HepG2 (cell line): ENCODE measurements at regions of chr3 and their contacts with region 1.

Region 1: DNA sequence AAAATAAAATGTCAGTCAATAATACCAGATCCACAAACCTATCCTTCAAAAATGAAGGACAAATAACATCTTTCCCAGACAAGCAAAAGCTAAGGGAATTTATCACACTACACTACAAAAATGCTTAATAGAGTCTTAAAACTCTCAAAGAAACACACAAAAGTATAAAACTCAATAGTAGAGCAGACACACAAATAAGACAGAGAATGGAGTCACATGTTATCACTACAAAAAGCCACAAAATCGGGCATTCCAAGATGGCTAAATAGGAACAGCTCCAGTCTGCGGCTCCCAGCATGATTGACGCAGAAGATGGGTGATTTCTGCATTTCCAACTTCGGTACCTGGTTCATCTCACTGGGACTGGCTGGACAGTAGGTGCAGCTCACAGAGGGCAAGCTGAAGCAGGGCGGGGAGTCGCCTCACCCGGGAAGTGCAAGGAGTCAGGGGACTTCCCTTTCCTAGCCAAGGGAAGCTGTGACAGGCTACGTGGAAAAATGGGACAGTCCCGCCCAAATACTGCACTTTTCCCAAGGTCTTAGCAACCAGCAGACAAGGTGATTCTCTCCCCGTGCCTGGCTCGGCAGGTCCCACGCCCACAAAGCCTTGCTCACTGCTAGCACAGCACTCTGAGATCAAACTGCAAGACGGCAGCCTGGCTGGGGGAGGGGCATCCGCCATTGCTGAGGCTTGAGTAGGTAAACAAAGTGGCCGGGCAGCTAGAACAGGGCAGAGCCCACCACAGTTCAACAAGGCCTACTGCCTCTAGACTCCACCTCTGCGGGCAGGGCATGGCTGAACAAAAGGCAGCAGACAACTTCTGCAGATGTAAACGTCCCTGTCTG is 46.3 kb downstream of the SENP7 start:
- DNase-seq: peak; percentile 53
- ATAC-seq: peak; percentile 97
- H3K4me3 ChIP-seq: peak overlapping the region; percentile 54 to 71 (median 70)
- H3K27ac ChIP-seq: peak overlapping the region; percentile 69
- H3K4me1 ChIP-seq: peaks cover 26% of the 10 kb centered on the region
- H3K27me3 ChIP-seq: no peaks in the 10 kb centered on the region
- CTCF ChIP-seq: no peak
- EP300 ChIP-seq: no peak
- POLR2A ChIP-seq: peak; percentile 25 to 44; a peak in 2 of 4 replicates
- RAD21 ChIP-seq: no peak

Region 2: DNA sequence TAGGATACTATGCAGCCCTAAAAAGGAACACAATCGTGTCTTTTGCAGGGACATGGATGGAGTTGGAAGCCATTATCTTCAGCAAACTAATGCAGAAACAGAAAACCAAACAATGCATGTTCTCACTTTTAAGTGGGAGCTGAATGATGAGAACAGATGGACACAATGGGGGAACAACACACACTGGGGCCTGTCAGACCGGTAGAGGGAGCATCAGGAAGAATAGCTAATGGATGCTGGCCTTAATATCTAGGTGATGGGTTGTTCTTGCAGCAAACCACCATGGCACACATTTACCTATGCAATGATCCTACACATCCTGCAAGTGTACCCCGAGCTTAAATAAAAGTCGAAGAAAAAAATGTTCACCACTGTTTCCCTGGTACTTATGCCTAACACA is 28.9 kb after region 1 on chr3:
- CTCF ChIA-PET with region 1: no interaction called
- POLR2A ChIA-PET with region 1: no interaction called
- in situ Hi-C with region 1: no loop called
- intact Hi-C with region 1: no loop called
- DNase-seq: no peak
- ATAC-seq: peak; percentile 80
- H3K4me3 ChIP-seq: no peak overlapping the region
- H3K27ac ChIP-seq: no peak overlapping the region
- H3K4me1 ChIP-seq: peaks cover 7% of the 10 kb centered on the region
- H3K27me3 ChIP-seq: no peaks in the 10 kb centered on the region
- CTCF ChIP-seq: peak; percentile 46
- EP300 ChIP-seq: no peak
- POLR2A ChIP-seq: no peak
- RAD21 ChIP-seq: no peak

Region 3: DNA sequence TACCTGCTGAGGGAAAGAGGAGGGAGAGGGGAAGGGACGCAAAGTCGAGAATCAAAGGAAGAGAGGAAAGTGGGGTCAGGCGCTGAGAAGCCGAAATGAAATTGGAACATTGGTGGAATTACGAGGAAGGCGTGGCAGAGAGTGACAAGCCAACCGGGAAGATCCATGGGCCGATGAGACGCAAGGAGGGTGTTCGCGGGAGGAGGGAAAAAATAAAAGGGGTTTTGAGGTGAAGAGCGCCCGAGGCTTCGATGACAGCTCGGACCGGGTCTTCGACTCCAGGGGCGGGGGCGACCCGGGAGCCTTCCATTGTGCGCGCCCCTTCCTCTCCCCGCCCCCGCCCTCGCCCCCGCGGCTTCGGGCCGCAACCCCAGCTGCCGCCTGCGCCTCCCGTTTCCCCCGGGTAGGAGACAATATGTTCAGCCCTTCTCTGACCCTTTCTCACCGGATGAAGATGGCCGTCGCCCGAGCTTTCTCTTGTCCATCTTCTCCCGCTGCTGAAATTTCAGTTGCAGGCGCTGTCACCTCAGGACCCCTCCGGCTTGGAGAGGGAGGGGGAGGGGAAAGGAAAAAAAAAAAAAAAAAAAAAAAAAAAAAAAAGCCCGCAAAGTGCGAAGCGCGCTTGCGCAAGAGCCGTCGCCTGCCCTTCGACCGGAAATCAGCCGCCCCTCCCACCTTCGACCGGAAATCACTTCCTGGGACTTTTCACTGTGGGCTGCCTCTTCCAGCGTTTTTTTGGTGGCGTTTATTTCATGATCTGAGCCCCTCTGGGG is 46.1 kb after region 1 on chr3 and contains the start of gene SENP7:
- CTCF ChIA-PET with region 1: no interaction called
- POLR2A ChIA-PET with region 1: interaction called, 7 read pairs
- in situ Hi-C with region 1: no loop called
- intact Hi-C with region 1: loop called (anchors 5 kb)
- DNase-seq: peak; percentile 71
- ATAC-seq: peak; percentile 85
- H3K4me3 ChIP-seq: peak within 1 kb of the TSS; percentile 80 to 92 (median 83)
- H3K27ac ChIP-seq: peak within 1 kb of the TSS; percentile 93
- H3K4me1 ChIP-seq: peaks cover 13% of the 10 kb centered on the region
- H3K27me3 ChIP-seq: no peaks in the 10 kb centered on the region; a peak in 1 of 5 replicates
- CTCF ChIP-seq: no peak
- EP300 ChIP-seq: no peak
- POLR2A ChIP-seq: peak; percentile 48 to 66
- RAD21 ChIP-seq: no peak
- total RNA-seq, gene SENP7: 10.0 and 10.3 TPM in 2 replicates

Region 4: GRCh38 chr3:101531473-101532086 is 64.9 kb after region 1 on chr3:
- CTCF ChIA-PET with region 1: no interaction called
- POLR2A ChIA-PET with region 1: no interaction called
- in situ Hi-C with region 1: no loop called
- intact Hi-C with region 1: no loop called
- DNase-seq: no peak
- ATAC-seq: no peak
- H3K4me3 ChIP-seq: no peak overlapping the region
- H3K27ac ChIP-seq: no peak overlapping the region
- H3K4me1 ChIP-seq: no peaks in the 10 kb centered on the region
- H3K27me3 ChIP-seq: 0 out of 5 replicates have a peak, but pooled peaks cover 0 to 7% of the 10 kb centered on the region in 2 experiments
- CTCF ChIP-seq: no peak
- EP300 ChIP-seq: no peak
- POLR2A ChIP-seq: no peak
- RAD21 ChIP-seq: no peak

Region 5: DNA sequence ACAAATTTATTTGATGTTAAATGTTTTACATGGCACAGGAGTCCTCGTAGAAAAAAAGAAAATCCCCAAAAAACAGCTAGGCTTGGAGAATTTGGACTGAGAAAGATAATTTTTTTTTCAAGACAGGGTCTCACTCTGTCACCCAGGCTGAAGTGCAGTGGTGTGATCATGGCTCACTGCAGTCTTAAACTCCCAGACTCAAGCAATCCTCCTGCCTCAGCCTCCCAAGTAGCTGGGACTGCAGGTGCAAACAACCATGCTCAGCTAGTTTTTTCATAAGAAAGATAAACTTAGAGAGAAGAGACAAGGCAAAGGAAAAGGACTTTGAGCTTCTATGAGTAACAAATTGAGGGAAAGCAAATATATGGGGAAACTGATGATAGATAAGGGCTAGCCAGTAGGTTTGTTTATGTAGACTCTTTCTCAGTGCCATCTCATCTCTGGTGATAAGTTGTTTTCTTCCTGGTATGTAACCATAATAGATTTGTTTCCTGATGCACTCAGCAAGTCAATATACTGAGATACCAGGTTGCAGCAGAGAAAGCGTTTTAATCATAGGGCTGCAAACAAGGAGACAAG is 81.9 kb after region 1 on chr3:
- CTCF ChIA-PET with region 1: no interaction called
- POLR2A ChIA-PET with region 1: no interaction called
- in situ Hi-C with region 1: no loop called
- intact Hi-C with region 1: loop called (anchors 5 kb)
- DNase-seq: peak; percentile 87
- ATAC-seq: peak; percentile 87
- H3K4me3 ChIP-seq: no peak overlapping the region; a peak in 1 of 6 replicates
- H3K27ac ChIP-seq: peak overlapping the region; percentile 55
- H3K4me1 ChIP-seq: peaks cover 57% of the 10 kb centered on the region
- H3K27me3 ChIP-seq: no peaks in the 10 kb centered on the region
- CTCF ChIP-seq: no peak
- EP300 ChIP-seq: peak in 1 of 2 experiments; percentile 81; a peak in 2 of 4 replicates
- POLR2A ChIP-seq: no peak
- RAD21 ChIP-seq: no peak